Activated naive CD4-positive, alpha-beta T cell treated with anti-CD3 and anti-CD28 coated beads for 36 hours (primary cell): ENCODE measurements at regions of chr6 and their contacts with region 1.

Region 1: DNA sequence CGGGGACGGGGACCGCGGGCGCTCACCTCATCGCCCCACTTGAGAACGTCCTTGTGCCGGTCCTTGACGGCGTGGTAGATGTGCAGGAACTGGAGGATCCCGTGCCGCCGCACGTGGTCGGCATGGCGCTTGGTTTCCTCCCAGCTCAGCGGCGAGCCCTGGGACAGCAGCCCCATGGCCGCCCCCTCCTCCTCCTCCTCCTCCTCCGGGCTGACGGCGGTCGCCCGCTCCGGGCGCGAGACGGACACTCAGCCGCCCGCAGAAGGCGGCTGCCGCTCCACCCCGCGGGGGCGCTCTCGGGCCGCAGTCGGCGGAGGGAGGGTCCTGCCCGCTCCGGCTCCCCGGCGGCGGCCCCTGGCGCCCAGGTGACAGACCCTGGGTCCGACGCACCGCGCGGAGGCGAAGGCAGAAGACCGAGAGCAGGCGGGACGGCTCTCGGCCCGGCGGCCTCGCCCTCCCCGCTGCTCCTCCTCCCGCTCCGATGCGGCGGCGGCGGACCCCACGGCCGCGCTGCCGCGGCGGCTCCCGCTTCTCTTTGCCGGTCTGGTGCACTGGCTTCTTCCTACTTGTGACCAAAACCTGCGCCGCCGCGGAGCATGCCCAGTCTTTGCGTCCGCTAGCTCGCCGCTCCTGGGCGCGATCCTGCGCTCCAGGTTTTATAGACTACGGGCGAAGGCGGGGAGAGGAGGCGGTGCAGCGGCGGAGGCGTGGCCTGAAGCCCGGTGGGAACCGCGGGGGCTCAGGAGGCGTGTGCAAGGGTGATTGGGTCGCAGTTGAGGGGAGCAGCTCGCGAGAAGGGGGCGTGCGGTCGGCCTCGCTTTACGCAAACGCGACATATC is at the start of gene GCLC:
- DNase-seq: peak; percentile 88
- H3K4me3 Mint-ChIP-seq: peak within 1 kb of the TSS; percentile 94
- H3K27ac Mint-ChIP-seq: peak within 1 kb of the TSS; percentile 86
- H3K4me1 Mint-ChIP-seq: peaks cover 63% of the 10 kb centered on the region
- H3K27me3 Mint-ChIP-seq: no peaks in the 10 kb centered on the region
- total RNA-seq, gene GCLC: 13.9 to 18.1 TPM

Region 2: GRCh38 chr6:53064726-53065215 is 479.9 kb before region 1 on chr6:
- CTCF ChIA-PET with region 1: no interaction called
- intact Hi-C with region 1: loop called (anchors 2 kb)
- DNase-seq: peak; percentile 99
- H3K4me3 Mint-ChIP-seq: peak overlapping the region; percentile 97
- H3K27ac Mint-ChIP-seq: peak overlapping the region; percentile 99
- H3K4me1 Mint-ChIP-seq: peaks cover 55% of the 10 kb centered on the region
- H3K27me3 Mint-ChIP-seq: no peaks in the 10 kb centered on the region

Region 3: DNA sequence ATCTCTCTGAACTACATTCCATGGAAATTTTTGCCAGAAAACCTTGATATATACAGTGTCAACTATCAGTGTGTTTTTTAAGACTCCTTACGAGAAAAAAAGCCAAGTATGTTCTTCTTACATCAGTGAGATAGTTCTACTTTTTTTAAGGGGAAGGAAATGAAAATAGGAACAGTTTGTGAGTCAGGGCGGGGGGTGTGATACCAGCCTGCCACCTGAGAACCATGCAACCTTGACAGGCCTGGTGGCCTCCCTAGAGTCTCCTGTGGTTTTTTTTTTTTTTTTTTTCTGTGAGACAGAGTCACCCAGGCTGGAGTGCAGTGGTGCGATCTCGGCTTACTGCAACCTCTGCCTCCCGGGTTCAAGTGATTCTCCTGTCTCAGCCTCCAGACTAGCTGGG is 299.7 kb before region 1 on chr6:
- CTCF ChIA-PET with region 1: no interaction called
- intact Hi-C with region 1: no loop called
- DNase-seq: peak; percentile 65
- H3K4me3 Mint-ChIP-seq: no peak overlapping the region
- H3K27ac Mint-ChIP-seq: no peak overlapping the region
- H3K4me1 Mint-ChIP-seq: peaks cover 37% of the 10 kb centered on the region
- H3K27me3 Mint-ChIP-seq: no peaks in the 10 kb centered on the region

Region 4: DNA sequence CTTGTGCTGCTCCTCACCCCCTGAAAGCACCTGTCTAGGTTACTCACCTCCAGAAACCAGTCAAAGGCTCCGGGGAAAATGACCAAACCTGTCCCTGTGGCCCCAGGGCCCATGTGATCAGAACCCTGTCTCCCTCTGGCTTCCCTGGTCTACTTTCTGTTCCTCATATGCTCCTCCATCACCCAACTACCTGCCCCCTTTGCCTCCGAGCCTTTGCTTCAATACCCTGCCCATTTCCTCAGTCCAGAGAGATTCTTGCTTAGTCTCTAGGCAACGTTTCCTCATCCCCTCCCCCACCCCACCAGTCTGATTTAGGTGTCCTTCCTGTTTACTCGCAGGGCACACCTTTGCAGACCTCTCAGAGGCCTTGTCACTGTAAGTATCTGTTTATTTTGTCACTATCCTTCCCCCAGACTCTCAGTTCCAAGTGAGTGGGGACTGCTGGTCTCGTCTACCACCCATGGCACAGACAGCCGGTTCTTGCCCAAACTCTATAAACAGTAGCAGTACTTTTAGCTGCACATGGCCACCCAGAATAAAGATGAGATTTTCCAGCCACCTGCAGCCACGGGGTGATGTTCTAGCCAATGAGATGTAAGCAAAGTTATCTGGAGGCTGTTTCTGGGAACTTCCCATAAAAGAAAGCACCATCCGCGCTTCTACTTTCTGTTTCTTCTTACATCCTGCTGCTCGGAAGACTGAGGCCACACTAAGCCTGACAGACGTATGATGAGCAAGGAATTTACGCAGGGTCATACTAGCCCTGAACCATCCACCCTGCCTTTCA is 209.3 kb before region 1 on chr6:
- CTCF ChIA-PET with region 1: no interaction called
- intact Hi-C with region 1: loop called (anchors 1 kb)
- DNase-seq: peak; percentile 79
- H3K4me3 Mint-ChIP-seq: peak overlapping the region; percentile 80
- H3K27ac Mint-ChIP-seq: peak overlapping the region; percentile 99
- H3K4me1 Mint-ChIP-seq: peaks cover 85% of the 10 kb centered on the region
- H3K27me3 Mint-ChIP-seq: no peaks in the 10 kb centered on the region

Region 5: GRCh38 chr6:53492860-53493634 is 51.6 kb before region 1 on chr6:
- CTCF ChIA-PET with region 1: interaction called, 5 read pairs
- intact Hi-C with region 1: loop called (anchors 1 kb)
- DNase-seq: peak; percentile 45
- H3K4me3 Mint-ChIP-seq: no peak overlapping the region
- H3K27ac Mint-ChIP-seq: no peak overlapping the region
- H3K4me1 Mint-ChIP-seq: peaks cover 10% of the 10 kb centered on the region
- H3K27me3 Mint-ChIP-seq: peaks cover 16% of the 10 kb centered on the region

Region 6: GRCh38 chr6:53651764-53652401 is 107.2 kb after region 1 on chr6:
- CTCF ChIA-PET with region 1: interaction called, 19 read pairs
- intact Hi-C with region 1: loop called (anchors 1 kb)
- DNase-seq: peak; percentile 81
- H3K4me3 Mint-ChIP-seq: peak overlapping the region; percentile 85
- H3K27ac Mint-ChIP-seq: peak overlapping the region; percentile 46
- H3K4me1 Mint-ChIP-seq: peaks cover 26% of the 10 kb centered on the region
- H3K27me3 Mint-ChIP-seq: no peaks in the 10 kb centered on the region